Left colon (tissue), 2 donors: ENCODE measurements at regions of chrX and their contacts with region 1.

Region 1: GRCh38 chrX:22652596-22652995 is 347.2 kb upstream of the DDX53 start:
- DNase-seq: peak; percentile 5 to 26
- ATAC-seq: peak; percentile 93

Region 2: DNA sequence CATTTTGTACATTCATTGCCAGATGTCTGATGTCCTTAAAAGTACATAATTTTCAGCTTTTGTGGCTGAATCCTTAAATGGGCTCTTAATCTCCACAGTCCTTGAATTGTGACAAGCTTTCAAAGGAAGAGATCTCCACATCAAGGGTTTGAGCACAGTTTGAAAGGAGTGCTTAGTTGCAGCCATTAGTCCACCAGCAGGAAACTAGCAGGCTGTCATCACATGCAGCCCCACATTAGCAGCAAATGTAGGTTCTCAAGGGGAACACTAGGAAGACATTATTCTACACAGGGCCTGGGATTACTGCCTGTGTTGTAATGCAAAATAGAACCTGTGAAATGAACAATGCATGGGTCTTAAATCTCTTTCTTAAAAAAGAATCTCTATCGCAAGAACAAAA is 206.7 kb before region 1 on chrX:
- intact Hi-C with region 1: loop called in 1 of 2 experiments (anchors 10 kb)
- DNase-seq: no peak
- ATAC-seq: no peak